GM12878 (cell line): ENCODE measurements at regions of chr7 and their contacts with region 1.

Region 1: DNA sequence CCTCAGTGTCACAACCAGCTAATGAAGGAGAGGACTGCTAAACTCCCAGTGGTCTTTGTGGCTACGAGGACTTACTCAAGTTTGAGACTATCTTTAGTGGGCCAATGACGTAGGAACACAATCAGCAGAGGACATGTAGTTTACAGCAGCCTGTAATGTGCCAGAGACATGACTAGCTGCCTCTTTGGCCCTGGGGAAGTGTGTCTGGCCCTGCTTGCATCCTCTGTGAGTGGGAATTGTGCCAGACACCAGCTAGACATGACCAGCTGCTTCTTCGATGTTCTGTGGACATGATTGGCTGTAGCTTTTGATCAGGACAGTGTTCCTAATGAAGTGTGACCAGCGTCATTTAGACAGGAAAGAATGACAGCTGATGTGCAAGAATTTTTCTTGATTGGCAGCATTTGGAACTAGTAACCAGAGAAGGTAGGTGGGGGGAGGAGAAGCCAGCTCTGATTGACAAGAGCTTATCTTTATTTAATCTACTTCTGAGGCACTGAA is 141.7 kb downstream of the AUTS2 start:
- DNase-seq: peak; percentile 81
- ATAC-seq: peak; percentile 82
- H3K4me3 ChIP-seq: no peak overlapping the region
- H3K27ac ChIP-seq: peak overlapping the region; percentile 29
- H3K4me1 ChIP-seq: peaks cover 32% of the 10 kb centered on the region
- H3K27me3 ChIP-seq: no peaks in the 10 kb centered on the region
- CTCF ChIP-seq: no peak
- EP300 ChIP-seq: peak; percentile 62 to 67; a peak in 2 of 4 replicates
- POLR2A ChIP-seq: peak; percentile 48; the same call in 1 of the 2 replicates
- RAD21 ChIP-seq: 0 out of 2 replicates have a peak, but pooled peaks have one; percentile 9

Region 2: GRCh38 chr7:68511281-68511680 is 1228.7 kb before region 1 on chr7:
- CTCF ChIA-PET with region 1: no interaction called
- POLR2A ChIA-PET with region 1: no interaction called
- RAD21 ChIA-PET with region 1: no interaction called
- SMC1A ChIA-PET with region 1: no interaction called
- in situ Hi-C with region 1: no loop called
- intact Hi-C with region 1: no loop called
- DNase-seq: no peak
- ATAC-seq: no peak
- H3K4me3 ChIP-seq: no peak overlapping the region
- H3K27ac ChIP-seq: no peak overlapping the region
- H3K4me1 ChIP-seq: no peaks in the 10 kb centered on the region
- H3K27me3 ChIP-seq: no peaks in the 10 kb centered on the region
- CTCF ChIP-seq: no peak
- EP300 ChIP-seq: no peak
- POLR2A ChIP-seq: no peak
- RAD21 ChIP-seq: no peak

Region 3: DNA sequence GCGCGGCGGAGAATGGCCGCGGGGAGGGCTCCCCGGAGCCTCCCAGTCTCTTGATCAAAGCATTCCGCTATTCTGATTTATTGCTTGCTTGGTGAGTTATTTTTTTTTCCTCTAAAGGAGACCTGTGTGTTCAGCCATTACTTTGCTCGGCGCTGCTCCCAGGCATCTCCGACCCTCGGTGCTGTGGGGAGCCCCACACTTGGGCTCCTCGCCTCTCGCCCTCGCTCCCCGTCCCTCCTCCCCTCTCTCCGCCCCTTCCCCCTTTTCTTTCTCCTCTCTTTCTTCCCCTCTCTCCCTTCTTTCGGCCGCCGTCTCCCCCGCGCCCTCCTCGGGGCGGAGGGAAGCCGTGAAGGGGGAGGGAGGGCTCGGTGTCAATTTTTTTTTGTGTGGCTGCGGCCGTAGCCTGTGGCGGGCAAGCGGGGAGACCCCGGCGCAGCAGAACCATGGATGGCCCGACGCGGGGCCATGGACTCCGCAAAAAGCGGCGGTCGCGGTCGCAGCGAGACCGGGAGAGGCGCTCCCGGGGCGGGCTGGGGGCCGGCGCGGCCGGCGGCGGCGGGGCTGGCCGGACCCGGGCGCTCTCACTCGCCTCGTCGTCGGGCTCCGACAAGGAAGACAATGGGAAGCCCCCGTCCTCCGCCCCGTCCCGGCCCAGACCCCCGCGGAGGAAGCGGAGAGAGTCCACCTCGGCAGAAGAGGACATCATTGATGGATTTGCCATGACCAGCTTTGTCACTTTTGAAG is 140.6 kb before region 1 on chr7:
- CTCF ChIA-PET with region 1: interaction called, 10 read pairs
- POLR2A ChIA-PET with region 1: no interaction called
- RAD21 ChIA-PET with region 1: interaction called, 25 read pairs
- SMC1A ChIA-PET with region 1: interaction called, 26 read pairs
- in situ Hi-C with region 1: no loop called
- intact Hi-C with region 1: loop called (anchors 5 kb)
- DNase-seq: no peak
- ATAC-seq: peak; percentile 1; the same call in 1 of the 3 replicates
- H3K4me3 ChIP-seq: peak overlapping the region; percentile 97
- H3K27ac ChIP-seq: peak overlapping the region; percentile 29; the same call in 1 of the 2 replicates
- H3K4me1 ChIP-seq: peaks cover 18% of the 10 kb centered on the region
- H3K27me3 ChIP-seq: no peaks in the 10 kb centered on the region; a peak in 1 of 4 replicates
- CTCF ChIP-seq: no peak
- EP300 ChIP-seq: no peak
- POLR2A ChIP-seq: no peak; the same call in 1 of the 2 replicates
- RAD21 ChIP-seq: no peak

Region 4: GRCh38 chr7:69677054-69677852 is 62.7 kb before region 1 on chr7:
- CTCF ChIA-PET with region 1: interaction called, 3 read pairs
- POLR2A ChIA-PET with region 1: interaction called, 4 read pairs
- RAD21 ChIA-PET with region 1: interaction called, 27 read pairs
- SMC1A ChIA-PET with region 1: interaction called, 25 read pairs
- in situ Hi-C with region 1: no loop called
- intact Hi-C with region 1: loop called (anchors 5 kb)
- DNase-seq: no peak
- ATAC-seq: peak; percentile 52
- H3K4me3 ChIP-seq: no peak overlapping the region
- H3K27ac ChIP-seq: peak overlapping the region; percentile 77
- H3K4me1 ChIP-seq: peaks cover 38% of the 10 kb centered on the region
- H3K27me3 ChIP-seq: no peaks in the 10 kb centered on the region
- CTCF ChIP-seq: peak; percentile 41 to 51 (median 45)
- EP300 ChIP-seq: no peak
- POLR2A ChIP-seq: no peak
- RAD21 ChIP-seq: peak; percentile 56

Region 5: GRCh38 chr7:69703099-69703498 is 36.9 kb before region 1 on chr7:
- CTCF ChIA-PET with region 1: interaction called, 14 read pairs
- POLR2A ChIA-PET with region 1: interaction called, 14 read pairs
- RAD21 ChIA-PET with region 1: interaction called, 47 read pairs
- SMC1A ChIA-PET with region 1: interaction called, 70 read pairs
- in situ Hi-C with region 1: no loop called
- intact Hi-C with region 1: no loop called
- DNase-seq: no peak
- ATAC-seq: peak; percentile 40
- H3K4me3 ChIP-seq: no peak overlapping the region
- H3K27ac ChIP-seq: no peak overlapping the region
- H3K4me1 ChIP-seq: peaks cover 17% of the 10 kb centered on the region
- H3K27me3 ChIP-seq: no peaks in the 10 kb centered on the region
- CTCF ChIP-seq: no peak
- EP300 ChIP-seq: no peak
- POLR2A ChIP-seq: no peak
- RAD21 ChIP-seq: no peak

Region 6: DNA sequence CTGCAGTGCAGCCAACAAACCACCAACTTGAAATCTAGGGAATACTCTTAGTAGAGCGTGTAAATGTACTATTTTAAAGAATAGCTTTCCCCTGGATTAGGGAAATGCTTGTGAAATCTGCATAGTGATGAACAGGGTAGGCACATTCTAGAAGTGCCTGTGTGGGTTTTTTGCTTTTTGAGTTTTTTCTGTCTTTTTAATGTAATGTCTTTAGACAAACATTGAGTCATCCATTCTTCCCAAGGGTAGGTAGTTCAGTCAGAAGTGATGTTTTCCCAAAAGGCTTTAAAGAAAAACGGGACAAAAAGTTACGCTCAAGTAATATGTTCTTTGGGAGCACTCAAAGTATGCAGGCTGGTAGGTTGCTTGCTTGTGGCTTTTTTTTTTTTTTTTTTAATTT is 11.7 kb before region 1 on chr7:
- CTCF ChIA-PET with region 1: interaction called, 6 read pairs
- POLR2A ChIA-PET with region 1: interaction called, 4 read pairs
- RAD21 ChIA-PET with region 1: interaction called, 7 read pairs
- SMC1A ChIA-PET with region 1: interaction called, 18 read pairs
- in situ Hi-C with region 1: no loop called
- intact Hi-C with region 1: no loop called
- DNase-seq: no peak
- ATAC-seq: no peak; the same call in 2 of the 3 replicates
- H3K4me3 ChIP-seq: no peak overlapping the region
- H3K27ac ChIP-seq: no peak overlapping the region
- H3K4me1 ChIP-seq: no peaks in the 10 kb centered on the region
- H3K27me3 ChIP-seq: no peaks in the 10 kb centered on the region; a peak in 1 of 4 replicates
- CTCF ChIP-seq: no peak
- EP300 ChIP-seq: no peak
- POLR2A ChIP-seq: no peak
- RAD21 ChIP-seq: no peak

Region 7: GRCh38 chr7:69775231-69775771 is 35.3 kb after region 1 on chr7:
- CTCF ChIA-PET with region 1: interaction called, 3 read pairs
- POLR2A ChIA-PET with region 1: interaction called, 4 read pairs
- RAD21 ChIA-PET with region 1: interaction called, 16 read pairs
- SMC1A ChIA-PET with region 1: interaction called, 11 read pairs
- in situ Hi-C with region 1: no loop called
- intact Hi-C with region 1: no loop called
- DNase-seq: no peak
- ATAC-seq: no peak
- H3K4me3 ChIP-seq: no peak overlapping the region
- H3K27ac ChIP-seq: no peak overlapping the region
- H3K4me1 ChIP-seq: peaks cover 5% of the 10 kb centered on the region
- H3K27me3 ChIP-seq: no peaks in the 10 kb centered on the region
- CTCF ChIP-seq: no peak
- EP300 ChIP-seq: no peak
- POLR2A ChIP-seq: no peak
- RAD21 ChIP-seq: no peak

Region 8: DNA sequence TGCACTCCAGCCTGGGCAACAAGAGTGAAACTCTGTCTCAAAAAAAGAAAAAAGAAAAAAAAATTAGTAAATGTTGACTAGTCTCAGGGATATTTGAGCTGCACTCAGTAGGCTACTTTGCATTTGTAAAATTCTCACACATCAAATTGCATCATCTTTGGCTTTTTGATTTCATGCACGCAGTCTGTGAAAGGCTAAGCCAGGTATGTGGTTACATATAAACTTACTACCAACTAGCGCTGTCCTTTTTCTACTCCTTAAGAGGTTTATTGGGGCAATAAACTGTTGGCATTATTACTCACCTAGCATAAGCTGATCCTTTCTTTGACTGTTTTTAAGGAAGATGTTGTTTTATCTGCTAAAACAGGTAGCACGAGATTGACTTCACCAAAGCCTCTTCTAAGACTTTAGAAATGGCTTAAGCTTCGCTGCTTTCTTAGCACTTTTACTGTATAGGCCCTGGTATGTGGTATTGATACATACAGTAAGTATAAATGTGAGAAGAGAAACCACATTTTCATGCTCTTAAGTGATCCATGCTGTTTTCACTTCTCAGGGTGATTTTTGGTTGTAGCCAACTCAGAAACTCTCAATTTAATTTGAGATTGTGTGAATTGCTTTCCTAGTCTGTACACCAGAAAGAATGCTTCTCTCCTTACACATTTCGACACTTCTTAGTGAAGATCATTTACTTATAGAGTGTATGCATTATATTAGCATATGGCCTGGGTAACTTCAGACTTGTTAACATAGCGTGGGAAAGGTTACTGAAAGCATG is 182.2 kb after region 1 on chr7:
- CTCF ChIA-PET with region 1: no interaction called
- POLR2A ChIA-PET with region 1: no interaction called
- RAD21 ChIA-PET with region 1: interaction called, 13 read pairs
- SMC1A ChIA-PET with region 1: interaction called, 6 read pairs
- in situ Hi-C with region 1: no loop called
- intact Hi-C with region 1: loop called (anchors 1 kb)
- DNase-seq: peak; percentile 76
- ATAC-seq: peak; percentile 92
- H3K4me3 ChIP-seq: no peak overlapping the region
- H3K27ac ChIP-seq: peak overlapping the region; percentile 91
- H3K4me1 ChIP-seq: peaks cover 16% of the 10 kb centered on the region
- H3K27me3 ChIP-seq: no peaks in the 10 kb centered on the region
- CTCF ChIP-seq: no peak
- EP300 ChIP-seq: no peak
- POLR2A ChIP-seq: no peak
- RAD21 ChIP-seq: peak; percentile 18